Mammary epithelial cell (primary cell): ENCODE measurements at regions of chr10 and their contacts with region 1.

Region 1: DNA sequence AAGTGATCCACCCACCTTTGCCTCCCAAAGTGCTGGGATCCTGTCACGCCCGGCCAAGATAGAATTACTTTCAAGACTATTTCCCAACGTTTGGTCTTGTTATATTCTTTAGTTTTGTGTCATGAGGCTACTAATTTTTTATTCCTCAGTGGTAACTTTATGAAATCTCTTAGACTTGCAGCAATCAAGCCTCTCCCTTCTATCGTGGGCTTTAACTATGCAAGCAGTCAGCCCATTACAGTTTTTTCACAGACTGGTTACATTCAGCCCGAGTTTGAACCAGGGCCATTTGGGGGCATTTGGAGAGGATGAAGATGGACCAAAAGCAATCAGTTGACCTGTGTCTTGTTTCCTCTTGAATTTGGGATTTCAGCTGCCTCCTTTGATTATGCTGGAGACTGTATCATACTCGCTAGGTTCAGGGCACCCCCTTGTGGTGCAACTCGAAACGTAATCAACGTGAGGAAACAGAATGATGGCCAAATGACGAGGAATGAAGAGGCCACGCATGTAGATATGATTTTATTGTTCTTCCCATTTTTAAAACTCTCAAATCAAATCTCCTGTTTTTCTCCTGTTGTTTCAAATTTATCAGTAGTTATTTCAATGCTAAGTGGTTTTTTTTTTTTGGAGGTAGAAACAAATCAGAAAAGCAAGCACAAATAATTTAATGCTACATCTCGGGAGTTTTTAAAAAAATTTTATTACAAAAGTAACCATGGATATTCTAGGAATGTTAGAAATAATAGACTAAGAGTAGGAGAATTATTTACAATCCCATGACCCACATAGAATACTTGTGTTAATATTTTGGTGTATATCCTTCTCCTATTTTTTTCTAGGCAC is 151.6 kb downstream of the KIAA1217 start:
- DNase-seq: peak; percentile 67
- H3K4me3 ChIP-seq: no peak overlapping the region
- H3K27ac ChIP-seq: no peak overlapping the region
- H3K4me1 ChIP-seq: no peaks in the 10 kb centered on the region
- H3K27me3 ChIP-seq: no peaks in the 10 kb centered on the region
- CTCF ChIP-seq: peak; percentile 82 to 88

Region 2: GRCh38 chr10:23994479-23995046 is 365.9 kb before region 1 on chr10:
- CTCF ChIA-PET with region 1: no interaction called
- dilution Hi-C with region 1: no loop called
- in situ Hi-C with region 1: loop called (anchors 25 kb)
- intact Hi-C with region 1: loop called (anchors 1 kb)
- DNase-seq: peak; percentile 25
- H3K4me3 ChIP-seq: no peak overlapping the region
- H3K27ac ChIP-seq: no peak overlapping the region
- H3K4me1 ChIP-seq: no peaks in the 10 kb centered on the region
- H3K27me3 ChIP-seq: peaks cover 3% of the 10 kb centered on the region
- CTCF ChIP-seq: peak; percentile 91 to 93

Region 3: DNA sequence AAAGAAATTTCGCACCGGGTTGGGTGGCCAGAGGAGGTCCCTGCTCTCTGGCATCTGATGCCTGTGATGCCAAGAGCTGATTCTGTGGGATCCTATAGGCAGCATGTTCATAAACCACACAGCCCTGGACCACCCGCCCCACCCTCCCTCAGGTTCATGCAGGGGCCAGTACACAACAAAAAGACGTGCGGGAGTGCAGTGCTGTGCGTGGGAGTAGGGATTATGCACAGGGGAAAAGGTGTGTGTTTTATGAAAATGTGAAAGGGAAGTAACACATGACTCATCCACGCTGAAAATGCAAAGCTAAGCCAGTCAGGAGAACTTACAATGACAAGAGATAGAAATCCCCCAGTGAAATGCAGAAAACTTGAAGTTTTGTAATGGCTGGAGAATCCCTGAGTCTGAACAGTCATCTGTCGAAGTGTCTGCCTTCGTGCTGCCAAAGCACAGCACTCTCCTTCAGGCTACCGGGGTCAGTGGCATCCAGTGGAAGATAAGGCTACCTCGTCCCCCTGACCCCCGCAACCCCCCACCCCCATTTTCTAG is 150.5 kb before region 1 on chr10:
- CTCF ChIA-PET with region 1: interaction called, 9 read pairs
- dilution Hi-C with region 1: no loop called
- in situ Hi-C with region 1: no loop called
- intact Hi-C with region 1: loop called (anchors 1 kb)
- DNase-seq: peak; percentile 91
- H3K4me3 ChIP-seq: peak overlapping the region; percentile 25 to 53 (median 42)
- H3K27ac ChIP-seq: peak overlapping the region; percentile 70
- H3K4me1 ChIP-seq: peaks cover 15% of the 10 kb centered on the region
- H3K27me3 ChIP-seq: no peaks in the 10 kb centered on the region
- CTCF ChIP-seq: no peak

Region 4: GRCh38 chr10:24255881-24256311 is 104.6 kb before region 1 on chr10:
- CTCF ChIA-PET with region 1: no interaction called
- dilution Hi-C with region 1: no loop called
- in situ Hi-C with region 1: no loop called
- intact Hi-C with region 1: loop called (anchors 5 kb)
- DNase-seq: peak; percentile 96
- H3K4me3 ChIP-seq: peak overlapping the region; percentile 64 to 68 (median 65)
- H3K27ac ChIP-seq: peak overlapping the region; percentile 96
- H3K4me1 ChIP-seq: peaks cover 51% of the 10 kb centered on the region
- H3K27me3 ChIP-seq: no peaks in the 10 kb centered on the region
- CTCF ChIP-seq: no peak

Region 5: GRCh38 chr10:24307696-24308485 is 52.6 kb before region 1 on chr10:
- CTCF ChIA-PET with region 1: no interaction called
- dilution Hi-C with region 1: loop called (anchors 5 kb)
- in situ Hi-C with region 1: no loop called
- intact Hi-C with region 1: no loop called
- DNase-seq: no peak
- H3K4me3 ChIP-seq: no peak overlapping the region
- H3K27ac ChIP-seq: no peak overlapping the region
- H3K4me1 ChIP-seq: peaks cover 19% of the 10 kb centered on the region
- H3K27me3 ChIP-seq: no peaks in the 10 kb centered on the region
- CTCF ChIP-seq: no peak

Region 6: GRCh38 chr10:24406809-24407483 is 46.4 kb after region 1 on chr10:
- CTCF ChIA-PET with region 1: no interaction called
- dilution Hi-C with region 1: no loop called
- in situ Hi-C with region 1: no loop called
- intact Hi-C with region 1: no loop called
- DNase-seq: no peak
- H3K4me3 ChIP-seq: no peak overlapping the region
- H3K27ac ChIP-seq: no peak overlapping the region
- H3K4me1 ChIP-seq: no peaks in the 10 kb centered on the region
- H3K27me3 ChIP-seq: no peaks in the 10 kb centered on the region
- CTCF ChIP-seq: no peak

Region 7: GRCh38 chr10:24518981-24519597 is 158.6 kb after region 1 on chr10:
- CTCF ChIA-PET with region 1: no interaction called
- dilution Hi-C with region 1: no loop called
- in situ Hi-C with region 1: no loop called
- intact Hi-C with region 1: loop called (anchors 5 kb)
- DNase-seq: peak; percentile 36
- H3K4me3 ChIP-seq: no peak overlapping the region
- H3K27ac ChIP-seq: no peak overlapping the region
- H3K4me1 ChIP-seq: peaks cover 3% of the 10 kb centered on the region
- H3K27me3 ChIP-seq: no peaks in the 10 kb centered on the region
- CTCF ChIP-seq: peak; percentile 79 to 80

Region 8: DNA sequence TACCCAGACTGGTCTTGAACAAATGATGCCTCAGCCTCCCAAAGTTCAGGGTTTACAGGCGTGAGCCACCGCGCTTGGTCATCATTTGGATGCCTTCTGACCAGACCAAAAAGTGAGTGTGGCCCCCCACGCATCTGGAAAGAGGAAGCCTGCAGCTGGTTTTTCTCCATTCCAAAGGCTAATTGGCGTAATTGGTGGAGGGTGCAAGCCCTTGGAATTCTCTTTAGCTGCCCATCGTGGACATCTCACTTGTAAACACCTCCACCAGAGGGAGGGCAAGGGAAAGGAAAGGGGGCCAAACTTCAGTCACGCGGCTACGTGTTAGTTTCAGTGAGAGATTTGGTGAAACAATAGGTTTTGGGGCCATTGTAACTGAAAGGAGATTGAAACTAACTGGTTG is 367.3 kb after region 1 on chr10:
- CTCF ChIA-PET with region 1: no interaction called
- dilution Hi-C with region 1: no loop called
- in situ Hi-C with region 1: no loop called
- intact Hi-C with region 1: no loop called
- DNase-seq: no peak
- H3K4me3 ChIP-seq: no peak overlapping the region
- H3K27ac ChIP-seq: no peak overlapping the region
- H3K4me1 ChIP-seq: peaks cover 19% of the 10 kb centered on the region
- H3K27me3 ChIP-seq: no peaks in the 10 kb centered on the region
- CTCF ChIP-seq: peak in 1 of 2 donors; percentile 20